Caco-2 (cell line): ENCODE measurements at regions of chr15 and their contacts with region 1.

Region 1: DNA sequence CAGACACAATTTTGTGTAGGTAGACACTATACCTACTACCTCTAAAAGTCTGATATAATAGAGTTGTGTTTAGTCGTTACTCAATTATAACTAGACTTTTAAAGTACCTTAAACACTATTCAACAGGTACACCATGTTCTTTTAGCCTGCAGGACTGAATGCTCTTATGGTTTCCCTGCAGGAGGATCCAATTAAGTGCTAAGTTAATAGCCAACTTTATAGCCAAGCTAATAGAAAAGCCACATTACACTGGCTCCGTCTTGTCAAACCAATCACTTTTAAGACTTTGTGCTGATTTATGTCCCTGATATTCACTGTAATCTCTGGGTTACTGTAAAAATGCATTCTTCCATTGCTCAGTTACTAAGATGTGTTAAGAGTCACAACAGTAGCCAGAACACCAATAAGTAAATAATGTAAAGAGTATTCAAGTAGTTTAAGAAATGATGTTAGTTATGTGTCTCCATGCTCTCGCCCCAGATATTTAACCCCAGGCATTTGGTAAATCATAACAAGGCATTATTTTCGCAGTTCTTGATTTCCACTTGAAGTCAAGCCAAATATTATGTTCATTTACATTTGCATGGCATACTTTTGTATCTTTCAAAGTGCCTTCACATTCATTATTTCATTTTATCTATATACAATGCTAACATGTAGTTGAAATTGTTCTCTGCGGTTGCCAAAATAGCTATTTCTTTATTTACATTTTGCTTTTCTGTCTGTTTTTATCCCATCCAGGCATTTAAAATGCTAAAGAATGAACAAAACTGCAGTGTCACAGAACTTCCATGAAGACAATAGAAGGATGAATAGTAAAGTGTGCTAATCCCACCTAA is 42.7 kb upstream of the AP4E1 start:
- DNase-seq: no peak
- H3K4me3 ChIP-seq: no peak overlapping the region
- H3K4me3 Mint-ChIP-seq: no peak overlapping the region
- H3K27ac Mint-ChIP-seq: peak overlapping the region; percentile 76
- H3K4me1 ChIP-seq: peaks cover 53% of the 10 kb centered on the region
- H3K4me1 Mint-ChIP-seq: peaks cover 27% of the 10 kb centered on the region
- H3K27me3 ChIP-seq: no peaks in the 10 kb centered on the region
- H3K27me3 Mint-ChIP-seq: no peaks in the 10 kb centered on the region
- CTCF ChIP-seq: no peak

Region 2: DNA sequence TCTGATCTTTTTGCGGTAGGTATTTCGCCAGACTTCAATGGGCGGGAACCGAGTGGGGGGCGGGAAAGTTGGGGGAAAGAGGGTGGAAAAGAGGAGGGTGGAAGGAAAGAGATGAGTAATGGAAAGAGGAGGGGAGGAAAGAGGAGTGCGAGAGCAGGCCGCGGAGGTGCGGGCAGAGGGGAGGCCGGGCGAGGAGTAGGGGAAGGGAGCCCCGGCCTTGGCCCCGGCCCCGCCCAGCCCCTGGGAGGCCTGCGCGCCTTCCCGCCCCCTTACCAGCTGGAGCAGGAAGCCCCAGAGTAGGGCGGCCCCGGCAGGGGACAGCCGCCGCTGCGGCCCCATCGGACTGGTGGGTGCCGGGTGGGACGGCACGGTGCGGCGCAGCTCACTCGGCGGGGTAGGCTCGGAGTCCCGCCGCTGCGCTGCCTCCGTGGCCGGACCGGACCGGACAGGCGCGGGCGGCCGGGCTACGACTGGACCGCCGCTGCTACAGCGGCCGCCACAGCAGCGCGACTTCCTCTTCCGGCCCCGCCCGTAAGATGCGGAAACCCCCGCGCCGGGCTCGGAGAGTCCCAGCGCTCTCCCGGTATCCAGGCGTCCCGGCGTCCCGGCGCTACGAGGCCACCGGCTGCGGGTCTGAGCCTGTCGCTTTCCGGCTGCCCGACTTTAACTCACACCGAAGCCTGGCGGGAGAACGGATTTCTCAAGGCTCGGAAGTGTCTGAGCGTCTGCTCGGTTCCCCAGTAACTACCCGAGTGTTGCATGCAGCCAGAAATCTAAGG is 100.3 kb before region 1 on chr15 and contains the start of gene SPPL2A:
- CTCF ChIA-PET with region 1: no interaction called
- POLR2A ChIA-PET with region 1: interaction called, 5 read pairs
- intact Hi-C with region 1: loop called (anchors 5 kb)
- DNase-seq: peak; percentile 89 to 90
- H3K4me3 ChIP-seq: peak within 1 kb of the TSS; percentile 57
- H3K4me3 Mint-ChIP-seq: peak within 1 kb of the TSS; percentile 77
- H3K27ac Mint-ChIP-seq: peak within 1 kb of the TSS; percentile 81
- H3K4me1 ChIP-seq: peaks cover 10% of the 10 kb centered on the region; the same call in 1 of the 2 replicates
- H3K4me1 Mint-ChIP-seq: peaks cover 37% of the 10 kb centered on the region
- H3K27me3 ChIP-seq: no peaks in the 10 kb centered on the region
- H3K27me3 Mint-ChIP-seq: no peaks in the 10 kb centered on the region
- CTCF ChIP-seq: no peak
- total RNA-seq, gene SPPL2A: 131 and 141 TPM in 2 replicates

Region 3: GRCh38 chr15:50774450-50774849 is 91.3 kb before region 1 on chr15:
- CTCF ChIA-PET with region 1: no interaction called
- POLR2A ChIA-PET with region 1: interaction called, 11 read pairs
- intact Hi-C with region 1: loop called (anchors 5 kb)
- DNase-seq: peak in 1 of 2 experiments; percentile 29
- H3K4me3 ChIP-seq: no peak overlapping the region
- H3K4me3 Mint-ChIP-seq: no peak overlapping the region
- H3K27ac Mint-ChIP-seq: no peak overlapping the region
- H3K4me1 ChIP-seq: peaks cover 3% of the 10 kb centered on the region; the same call in 1 of the 2 replicates
- H3K4me1 Mint-ChIP-seq: peaks cover 6% of the 10 kb centered on the region
- H3K27me3 ChIP-seq: no peaks in the 10 kb centered on the region
- H3K27me3 Mint-ChIP-seq: no peaks in the 10 kb centered on the region
- CTCF ChIP-seq: no peak

Region 4: DNA sequence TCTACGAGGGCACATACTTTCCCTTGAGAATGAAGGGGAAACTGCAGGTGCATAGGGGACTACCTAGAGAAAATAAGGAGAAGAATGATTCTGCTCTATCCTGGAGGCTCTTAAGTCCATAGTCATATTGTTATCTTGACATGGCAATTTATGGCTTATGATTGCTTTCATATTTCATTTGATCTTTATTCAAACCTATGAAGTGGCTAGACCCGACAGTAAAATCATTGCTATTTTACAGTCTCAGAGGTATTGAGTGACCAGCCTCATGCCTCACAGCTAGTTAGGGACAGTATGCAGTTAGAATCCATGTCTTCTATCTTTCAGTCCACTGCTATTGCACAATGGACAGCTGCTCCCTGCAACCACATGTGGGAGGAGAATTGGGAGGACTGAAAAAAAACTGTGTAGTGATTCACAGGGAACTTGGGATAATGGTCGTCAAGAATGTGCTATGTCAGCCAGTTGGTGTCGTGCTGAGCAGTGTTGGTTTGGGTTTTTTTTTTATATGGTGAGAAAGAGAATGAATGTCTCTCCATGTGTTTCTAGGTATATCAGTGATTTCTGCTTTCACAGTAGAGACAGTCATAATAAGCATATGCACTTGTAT is 37.0 kb before region 1 on chr15:
- CTCF ChIA-PET with region 1: no interaction called
- POLR2A ChIA-PET with region 1: no interaction called
- intact Hi-C with region 1: loop called (anchors 1 kb)
- DNase-seq: peak; percentile 74 to 79
- H3K4me3 ChIP-seq: no peak overlapping the region
- H3K4me3 Mint-ChIP-seq: peak overlapping the region; percentile 59
- H3K27ac Mint-ChIP-seq: peak overlapping the region; percentile 89
- H3K4me1 ChIP-seq: peaks cover 19% of the 10 kb centered on the region
- H3K4me1 Mint-ChIP-seq: peaks cover 15% of the 10 kb centered on the region
- H3K27me3 ChIP-seq: no peaks in the 10 kb centered on the region
- H3K27me3 Mint-ChIP-seq: no peaks in the 10 kb centered on the region
- CTCF ChIP-seq: peak in 1 of 2 experiments; percentile 21

Region 5: DNA sequence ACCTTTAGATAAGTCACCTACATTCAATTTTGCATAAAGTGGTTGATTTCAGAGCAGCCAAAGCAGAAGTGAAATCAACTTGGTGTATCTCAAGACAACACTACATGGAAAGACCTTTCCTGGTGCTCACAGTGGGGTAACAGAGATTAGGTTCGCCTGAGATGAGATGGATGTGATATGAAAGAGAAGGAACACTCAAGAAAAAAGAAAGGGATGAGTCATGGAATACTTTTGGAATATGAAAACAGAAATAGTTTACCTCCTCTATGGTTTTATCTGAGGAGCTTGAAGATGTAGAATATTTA is 10.7 kb before region 1 on chr15:
- CTCF ChIA-PET with region 1: no interaction called
- POLR2A ChIA-PET with region 1: no interaction called
- intact Hi-C with region 1: loop called (anchors 1 kb)
- DNase-seq: no peak
- H3K4me3 ChIP-seq: no peak overlapping the region
- H3K4me3 Mint-ChIP-seq: no peak overlapping the region
- H3K27ac Mint-ChIP-seq: peak overlapping the region; percentile 78
- H3K4me1 ChIP-seq: peaks cover 39% of the 10 kb centered on the region
- H3K4me1 Mint-ChIP-seq: peaks cover 25% of the 10 kb centered on the region
- H3K27me3 ChIP-seq: no peaks in the 10 kb centered on the region
- H3K27me3 Mint-ChIP-seq: no peaks in the 10 kb centered on the region
- CTCF ChIP-seq: no peak